ENCODE measurements at regions of chr12 and their contacts with region 1.

Region 1: DNA sequence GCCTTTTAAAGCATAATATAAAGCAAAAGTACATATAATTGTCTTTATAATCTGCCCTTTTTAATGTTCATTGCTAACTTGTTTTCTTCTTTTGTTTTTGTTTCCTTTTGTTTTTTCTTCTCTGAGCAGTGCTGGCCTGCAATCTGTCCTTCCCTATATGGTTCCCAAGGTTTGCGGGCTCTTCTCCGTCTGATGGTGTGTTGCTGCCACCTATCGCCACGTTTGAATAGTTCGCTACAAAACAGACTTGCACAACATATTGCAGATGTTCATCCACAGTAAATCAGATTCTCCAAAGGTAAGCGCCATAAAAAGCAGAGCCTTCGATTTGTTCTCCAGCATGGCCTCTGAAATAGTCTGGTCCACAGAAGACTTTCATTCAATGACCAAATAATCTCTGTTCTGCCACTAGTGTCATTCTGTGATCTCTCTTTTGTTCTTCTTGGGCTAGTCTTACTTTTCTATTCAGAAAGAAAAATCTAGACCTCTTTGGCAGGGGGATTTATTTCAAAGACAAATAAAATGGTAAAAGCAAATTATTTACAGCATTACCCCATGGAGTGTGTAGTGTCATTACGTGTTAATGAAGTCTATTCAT is 33.5 kb downstream of the C12orf50 start:
- DNase-seq: peak; percentile 67
- H3K4me3 Mint-ChIP-seq: no peak overlapping the region
- H3K27ac Mint-ChIP-seq: no peak overlapping the region
- H3K4me1 Mint-ChIP-seq: peaks cover 8% of the 10 kb centered on the region
- H3K27me3 Mint-ChIP-seq: no peaks in the 10 kb centered on the region
- CTCF ChIP-seq: peak; percentile 76

Region 2: DNA sequence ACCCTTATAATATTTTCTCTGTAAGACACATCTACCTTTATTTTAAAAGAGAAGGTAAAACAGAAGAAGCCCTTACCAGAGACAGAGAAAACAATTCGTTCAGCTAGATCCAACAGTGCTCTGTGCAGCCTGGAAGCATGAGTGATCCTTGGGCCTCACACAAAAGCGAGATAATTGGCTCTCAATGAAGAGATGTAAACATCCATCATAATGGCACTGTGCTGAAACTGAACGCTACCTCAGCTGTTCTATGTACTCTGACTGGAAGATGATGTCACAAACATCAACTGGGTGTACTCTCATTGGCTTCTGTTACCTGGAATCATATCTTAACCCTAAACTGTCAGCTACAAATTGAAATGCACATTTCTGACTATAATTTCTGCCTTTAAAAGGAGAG is 1739.5 kb before region 1 on chr12 and contains the start of gene MGAT4C:
- CTCF ChIA-PET with region 1: no interaction called
- intact Hi-C with region 1: loop called (anchors 5 kb)
- DNase-seq: no peak
- H3K4me3 Mint-ChIP-seq: no peak within 1 kb of the TSS
- H3K27ac Mint-ChIP-seq: no peak within 1 kb of the TSS
- H3K4me1 Mint-ChIP-seq: no peaks in the 10 kb centered on the region
- H3K27me3 Mint-ChIP-seq: no peaks in the 10 kb centered on the region
- CTCF ChIP-seq: no peak
- total RNA-seq, gene MGAT4C: not detected in 2 replicates

Region 3: DNA sequence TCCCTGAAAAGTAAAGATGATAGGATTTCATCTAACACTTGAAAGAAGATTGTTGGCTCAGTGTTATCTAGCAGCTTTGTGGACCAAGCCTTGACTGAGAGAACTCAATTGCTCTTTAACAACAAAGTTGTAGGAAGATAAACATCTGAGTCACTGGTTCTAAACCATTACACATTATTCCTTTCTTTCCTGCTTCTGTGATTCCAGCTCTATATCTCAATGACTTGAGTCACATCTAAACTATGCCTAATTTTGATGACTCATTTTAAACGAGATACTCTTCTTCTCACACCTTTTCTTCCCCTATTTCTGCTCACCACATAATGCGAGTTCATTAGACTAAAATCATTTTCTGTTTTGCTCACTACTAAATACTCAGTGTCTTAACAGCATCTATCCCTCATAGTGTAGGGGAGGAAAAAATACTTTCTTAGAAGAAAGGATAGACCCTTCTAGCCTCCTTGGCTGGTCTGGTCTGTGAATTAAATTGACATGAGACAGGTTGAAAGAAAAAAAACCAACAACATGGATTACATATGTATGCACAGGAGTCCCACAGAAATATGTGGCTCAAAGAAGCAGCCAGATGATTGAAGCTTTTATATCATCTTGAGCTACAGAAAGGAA is 167.9 kb before region 1 on chr12:
- CTCF ChIA-PET with region 1: no interaction called
- intact Hi-C with region 1: no loop called
- DNase-seq: no peak
- H3K4me3 Mint-ChIP-seq: no peak overlapping the region
- H3K27ac Mint-ChIP-seq: peak overlapping the region; percentile 43
- H3K4me1 Mint-ChIP-seq: peaks cover 42% of the 10 kb centered on the region
- H3K27me3 Mint-ChIP-seq: no peaks in the 10 kb centered on the region
- CTCF ChIP-seq: no peak

Region 4: GRCh38 chr12:87866578-87867292 is 128.9 kb before region 1 on chr12:
- CTCF ChIA-PET with region 1: no interaction called
- intact Hi-C with region 1: loop called (anchors 1 kb)
- DNase-seq: peak; percentile 8
- H3K4me3 Mint-ChIP-seq: no peak overlapping the region
- H3K27ac Mint-ChIP-seq: no peak overlapping the region
- H3K4me1 Mint-ChIP-seq: peaks cover 8% of the 10 kb centered on the region
- H3K27me3 Mint-ChIP-seq: no peaks in the 10 kb centered on the region
- CTCF ChIP-seq: peak; percentile 41

Region 5: GRCh38 chr12:87975879-87976278 is 19.8 kb before region 1 on chr12:
- CTCF ChIA-PET with region 1: no interaction called
- intact Hi-C with region 1: no loop called
- DNase-seq: no peak
- H3K4me3 Mint-ChIP-seq: no peak overlapping the region
- H3K27ac Mint-ChIP-seq: no peak overlapping the region
- H3K4me1 Mint-ChIP-seq: no peaks in the 10 kb centered on the region
- H3K27me3 Mint-ChIP-seq: no peaks in the 10 kb centered on the region
- CTCF ChIP-seq: no peak

Region 6: DNA sequence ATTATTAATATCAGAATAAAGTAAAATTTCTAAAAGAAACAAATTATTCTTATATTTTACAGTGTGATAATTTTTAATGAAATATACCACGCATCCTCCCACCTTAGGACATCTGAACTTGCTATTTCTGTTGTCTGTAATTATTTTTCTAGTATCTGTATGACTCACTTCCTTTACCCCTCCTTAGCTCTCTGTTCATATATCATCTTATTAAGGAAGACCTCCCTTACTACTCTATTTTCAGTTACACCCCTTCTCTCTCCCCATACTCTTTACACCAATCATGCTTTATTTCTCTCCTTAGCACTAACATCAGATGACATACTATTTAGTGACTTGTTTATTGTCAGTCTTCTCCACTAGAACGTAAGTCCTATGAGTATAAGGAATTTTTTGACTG is 67.7 kb after region 1 on chr12:
- CTCF ChIA-PET with region 1: no interaction called
- intact Hi-C with region 1: no loop called
- DNase-seq: no peak
- H3K4me3 Mint-ChIP-seq: no peak overlapping the region
- H3K27ac Mint-ChIP-seq: peak overlapping the region; percentile 1
- H3K4me1 Mint-ChIP-seq: peaks cover 11% of the 10 kb centered on the region
- H3K27me3 Mint-ChIP-seq: no peaks in the 10 kb centered on the region
- CTCF ChIP-seq: no peak